ENCODE measurements at regions of chr3 and their contacts with region 1.

Region 1: DNA sequence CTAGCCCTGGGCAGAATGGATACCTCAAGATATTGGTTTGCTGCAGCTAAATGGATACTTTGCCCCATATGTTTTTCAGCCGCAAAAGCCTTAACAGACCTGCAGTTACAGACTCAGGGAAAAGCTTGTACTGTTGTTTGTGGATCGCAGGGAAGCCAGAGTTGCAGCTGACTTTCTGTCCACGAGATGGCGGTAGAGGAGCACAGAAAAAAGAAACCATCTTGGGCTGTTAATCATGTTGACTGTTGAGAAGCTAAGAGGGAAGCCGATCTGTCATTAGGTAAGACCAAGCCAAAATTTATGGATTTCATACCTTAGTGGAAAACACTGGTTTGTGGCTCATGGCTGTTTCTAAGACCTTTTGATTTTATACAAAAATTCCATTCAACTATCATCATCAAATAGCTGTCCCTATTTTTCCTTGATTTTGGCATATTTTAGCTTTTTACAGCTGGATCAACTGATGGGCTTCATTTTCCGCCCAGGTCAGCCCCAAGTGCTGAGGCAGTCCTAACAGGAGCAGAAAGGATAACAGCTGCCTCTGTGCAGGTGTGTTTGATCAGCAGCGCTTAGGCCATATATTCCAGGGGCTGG is 205.7 kb upstream of the ZPLD1 start:
- DNase-seq: peak; percentile 60 to 86
- H3K4me3 ChIP-seq: no peak overlapping the region
- H3K27ac ChIP-seq: no peak overlapping the region
- H3K4me1 ChIP-seq: peaks cover 0 to 4% (median 0%) of the 10 kb centered on the region in 4 experiments; a peak in 1 of 7 replicates
- H3K27me3 ChIP-seq: no peaks in the 10 kb centered on the region
- CTCF ChIP-seq: peak; percentile 71 to 92 (median 90)
- EP300 ChIP-seq: no peak
- POLR2A ChIP-seq: no peak
- RAD21 ChIP-seq: peak; percentile 97

Region 2: GRCh38 chr3:101484805-101485620 is 744.1 kb before region 1 on chr3:
- CTCF ChIA-PET with region 1: no interaction called
- POLR2A ChIA-PET with region 1: no interaction called
- DNase-seq: no peak
- H3K4me3 ChIP-seq: no peak overlapping the region
- H3K27ac ChIP-seq: no peak overlapping the region
- H3K4me1 ChIP-seq: no peaks in the 10 kb centered on the region
- H3K27me3 ChIP-seq: no peaks in the 10 kb centered on the region
- CTCF ChIP-seq: no peak
- EP300 ChIP-seq: no peak
- POLR2A ChIP-seq: no peak
- RAD21 ChIP-seq: no peak

Region 3: GRCh38 chr3:101803173-101803782 is 425.9 kb before region 1 on chr3:
- CTCF ChIA-PET with region 1: interaction called, 174 read pairs
- POLR2A ChIA-PET with region 1: no interaction called
- DNase-seq: no peak
- H3K4me3 ChIP-seq: no peak overlapping the region
- H3K27ac ChIP-seq: no peak overlapping the region
- H3K4me1 ChIP-seq: no peaks in the 10 kb centered on the region
- H3K27me3 ChIP-seq: no peaks in the 10 kb centered on the region
- CTCF ChIP-seq: peak in 2 of 3 experiments; percentile 45 to 77; a peak in 2 of 4 replicates
- EP300 ChIP-seq: no peak
- POLR2A ChIP-seq: no peak
- RAD21 ChIP-seq: peak; percentile 53

Region 4: GRCh38 chr3:101816215-101817149 is 412.7 kb before region 1 on chr3:
- CTCF ChIA-PET with region 1: interaction called, 174 read pairs
- POLR2A ChIA-PET with region 1: no interaction called
- DNase-seq: no peak
- H3K4me3 ChIP-seq: no peak overlapping the region
- H3K27ac ChIP-seq: no peak overlapping the region
- H3K4me1 ChIP-seq: no peaks in the 10 kb centered on the region
- H3K27me3 ChIP-seq: no peaks in the 10 kb centered on the region
- CTCF ChIP-seq: no peak
- EP300 ChIP-seq: no peak
- POLR2A ChIP-seq: no peak
- RAD21 ChIP-seq: no peak

Region 5: DNA sequence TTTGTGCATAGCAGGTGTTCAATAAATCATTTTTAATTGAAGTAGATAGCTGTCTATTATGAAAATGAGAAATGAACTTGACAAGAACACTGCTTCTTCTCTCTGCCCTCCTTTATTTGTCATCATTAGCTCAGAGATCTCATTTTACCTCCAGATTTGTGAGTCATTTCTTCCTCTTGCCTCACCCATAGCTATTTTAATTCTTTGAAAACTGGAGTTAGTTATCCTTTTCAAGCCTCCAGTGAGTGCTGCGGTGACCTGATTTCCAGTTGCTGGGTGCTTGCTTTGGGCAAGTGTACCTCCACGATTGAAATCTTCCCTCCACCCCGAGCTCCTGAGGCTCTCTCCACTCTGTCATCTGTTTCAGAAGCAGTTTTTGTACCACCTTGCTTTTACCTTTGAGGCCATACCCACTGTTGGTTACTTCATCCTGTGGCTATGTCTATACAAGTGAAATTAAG is 265.2 kb before region 1 on chr3:
- CTCF ChIA-PET with region 1: interaction called, 12 read pairs
- POLR2A ChIA-PET with region 1: no interaction called
- DNase-seq: no peak
- H3K4me3 ChIP-seq: no peak overlapping the region
- H3K27ac ChIP-seq: no peak overlapping the region
- H3K4me1 ChIP-seq: no peaks in the 10 kb centered on the region
- H3K27me3 ChIP-seq: no peaks in the 10 kb centered on the region
- CTCF ChIP-seq: no peak
- EP300 ChIP-seq: no peak
- POLR2A ChIP-seq: no peak
- RAD21 ChIP-seq: no peak

Region 6: GRCh38 chr3:102471001-102471400 is 241.8 kb after region 1 on chr3:
- CTCF ChIA-PET with region 1: interaction called, 14 read pairs
- POLR2A ChIA-PET with region 1: no interaction called
- DNase-seq: peak; percentile 17 to 57
- H3K4me3 ChIP-seq: no peak overlapping the region
- H3K27ac ChIP-seq: no peak overlapping the region
- H3K4me1 ChIP-seq: no peaks in the 10 kb centered on the region
- H3K27me3 ChIP-seq: no peaks in the 10 kb centered on the region
- CTCF ChIP-seq: peak; percentile 67 to 76 (median 69)
- EP300 ChIP-seq: no peak
- POLR2A ChIP-seq: no peak
- RAD21 ChIP-seq: peak; percentile 50 to 65

Region 7: GRCh38 chr3:102536456-102536855 is 307.3 kb after region 1 on chr3:
- CTCF ChIA-PET with region 1: interaction called, 99 read pairs
- POLR2A ChIA-PET with region 1: no interaction called
- DNase-seq: no peak
- H3K4me3 ChIP-seq: no peak overlapping the region
- H3K27ac ChIP-seq: no peak overlapping the region
- H3K4me1 ChIP-seq: no peaks in the 10 kb centered on the region
- H3K27me3 ChIP-seq: peaks cover 0 to 1% (median 0%) of the 10 kb centered on the region in 4 experiments; a peak in 1 of 7 replicates
- CTCF ChIP-seq: peak in 2 of 3 experiments; percentile 48 to 51; a peak in 2 of 4 replicates
- EP300 ChIP-seq: no peak
- POLR2A ChIP-seq: no peak
- RAD21 ChIP-seq: peak; percentile 66 to 76

Region 8: DNA sequence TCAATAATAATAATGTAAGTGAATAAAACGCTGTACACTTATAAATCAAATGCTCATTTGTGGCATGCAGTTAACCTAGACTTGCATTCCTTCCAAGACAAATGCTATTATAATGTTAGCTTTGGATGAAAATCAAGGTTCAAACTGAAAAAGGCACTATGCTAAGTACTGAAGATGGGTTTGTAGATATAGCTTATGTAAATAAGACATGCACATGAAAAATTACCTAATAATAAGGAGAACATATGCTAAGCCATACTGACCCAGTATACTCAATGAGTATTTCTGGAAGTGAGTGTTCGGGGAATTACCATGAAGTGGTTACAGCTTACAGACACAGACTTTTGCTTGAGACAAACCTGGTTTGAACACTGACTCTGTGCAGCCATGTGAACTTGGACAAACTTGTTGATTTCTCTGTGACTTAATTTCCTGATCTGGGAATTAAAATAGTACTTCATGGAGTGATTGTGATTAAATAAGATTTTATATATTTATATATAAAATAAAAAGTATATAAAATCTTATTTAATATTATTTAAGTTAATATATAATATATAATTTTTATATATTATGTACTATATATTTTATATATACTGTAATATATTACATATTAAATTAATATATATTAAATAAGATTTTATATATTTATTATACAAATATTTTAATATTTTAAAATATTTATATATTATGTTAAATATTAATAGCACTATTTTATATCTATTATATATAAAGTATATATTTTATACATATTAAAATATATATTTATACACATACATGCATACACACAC is 364.8 kb after region 1 on chr3:
- CTCF ChIA-PET with region 1: no interaction called
- POLR2A ChIA-PET with region 1: no interaction called
- DNase-seq: no peak
- H3K4me3 ChIP-seq: no peak overlapping the region
- H3K27ac ChIP-seq: no peak overlapping the region
- H3K4me1 ChIP-seq: no peaks in the 10 kb centered on the region
- H3K27me3 ChIP-seq: no peaks in the 10 kb centered on the region
- CTCF ChIP-seq: no peak
- EP300 ChIP-seq: no peak
- POLR2A ChIP-seq: no peak
- RAD21 ChIP-seq: no peak